Mammary epithelial cell (primary cell): ENCODE measurements at regions of chr4 and their contacts with region 1.

Region 1: DNA sequence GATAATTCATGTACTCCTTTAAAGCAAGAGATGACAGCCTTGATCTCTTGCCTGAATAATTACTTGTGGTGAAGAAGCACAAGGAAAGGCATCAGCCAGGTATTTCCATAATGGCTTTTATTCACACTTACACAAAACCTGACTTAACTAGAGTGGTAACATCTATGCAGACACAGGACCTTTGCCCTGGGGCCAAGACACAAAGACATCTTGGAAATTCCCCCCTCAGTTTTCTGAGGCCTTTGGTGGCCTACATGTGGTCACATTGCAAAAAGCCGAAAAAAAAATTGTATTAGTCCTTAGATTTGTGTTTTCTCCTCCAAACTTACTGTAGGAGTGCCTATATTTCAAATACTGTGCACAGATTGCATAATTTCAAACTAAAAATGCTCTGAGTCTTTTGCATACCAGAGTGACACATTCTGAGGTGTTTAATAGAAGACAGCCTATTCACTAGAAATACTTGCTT is 172.4 kb downstream of the PDGFC start:
- DNase-seq: peak; percentile 60
- H3K4me3 ChIP-seq: peak overlapping the region in 1 of 3 experiments; percentile 2
- H3K27ac ChIP-seq: peak overlapping the region; percentile 88
- H3K4me1 ChIP-seq: peaks cover 38% of the 10 kb centered on the region
- H3K27me3 ChIP-seq: no peaks in the 10 kb centered on the region
- CTCF ChIP-seq: no peak

Region 2: GRCh38 chr4:156779774-156780173 is 19.4 kb before region 1 on chr4:
- CTCF ChIA-PET with region 1: interaction called, 3 read pairs
- dilution Hi-C with region 1: no loop called
- in situ Hi-C with region 1: no loop called
- intact Hi-C with region 1: loop called (anchors 1 kb)
- DNase-seq: peak; percentile 76
- H3K4me3 ChIP-seq: no peak overlapping the region
- H3K27ac ChIP-seq: peak overlapping the region; percentile 98
- H3K4me1 ChIP-seq: peaks cover 70% of the 10 kb centered on the region
- H3K27me3 ChIP-seq: no peaks in the 10 kb centered on the region
- CTCF ChIP-seq: no peak

Region 3: GRCh38 chr4:156829201-156829873 is 30.2 kb after region 1 on chr4:
- CTCF ChIA-PET with region 1: no interaction called
- dilution Hi-C with region 1: no loop called
- in situ Hi-C with region 1: no loop called
- intact Hi-C with region 1: loop called (anchors 2 kb)
- DNase-seq: peak; percentile 12
- H3K4me3 ChIP-seq: peak overlapping the region in 1 of 3 experiments; percentile 20
- H3K27ac ChIP-seq: peak overlapping the region; percentile 68
- H3K4me1 ChIP-seq: peaks cover 29% of the 10 kb centered on the region
- H3K27me3 ChIP-seq: no peaks in the 10 kb centered on the region
- CTCF ChIP-seq: no peak